ENCODE measurements at regions of chr3 and their contacts with region 1.

Region 1: GRCh38 chr3:34035775-34036413 is 237.5 kb downstream of the PDCD6IP start:
- DNase-seq: no peak
- H3K4me3 ChIP-seq: no peak overlapping the region
- H3K4me3 Mint-ChIP-seq: no peak overlapping the region
- H3K27ac Mint-ChIP-seq: no peak overlapping the region
- H3K4me1 ChIP-seq: no peaks in the 10 kb centered on the region
- H3K4me1 Mint-ChIP-seq: no peaks in the 10 kb centered on the region
- H3K27me3 ChIP-seq: no peaks in the 10 kb centered on the region
- H3K27me3 Mint-ChIP-seq: no peaks in the 10 kb centered on the region
- CTCF ChIP-seq: no peak

Region 2: GRCh38 chr3:34198309-34198708 is 162.4 kb after region 1 on chr3:
- CTCF ChIA-PET with region 1: no interaction called
- POLR2A ChIA-PET with region 1: no interaction called
- intact Hi-C with region 1: loop called (anchors 10 kb)
- DNase-seq: no peak
- H3K4me3 ChIP-seq: no peak overlapping the region
- H3K4me3 Mint-ChIP-seq: no peak overlapping the region
- H3K27ac Mint-ChIP-seq: no peak overlapping the region
- H3K4me1 ChIP-seq: no peaks in the 10 kb centered on the region
- H3K4me1 Mint-ChIP-seq: no peaks in the 10 kb centered on the region
- H3K27me3 ChIP-seq: no peaks in the 10 kb centered on the region
- H3K27me3 Mint-ChIP-seq: no peaks in the 10 kb centered on the region
- CTCF ChIP-seq: no peak

Region 3: DNA sequence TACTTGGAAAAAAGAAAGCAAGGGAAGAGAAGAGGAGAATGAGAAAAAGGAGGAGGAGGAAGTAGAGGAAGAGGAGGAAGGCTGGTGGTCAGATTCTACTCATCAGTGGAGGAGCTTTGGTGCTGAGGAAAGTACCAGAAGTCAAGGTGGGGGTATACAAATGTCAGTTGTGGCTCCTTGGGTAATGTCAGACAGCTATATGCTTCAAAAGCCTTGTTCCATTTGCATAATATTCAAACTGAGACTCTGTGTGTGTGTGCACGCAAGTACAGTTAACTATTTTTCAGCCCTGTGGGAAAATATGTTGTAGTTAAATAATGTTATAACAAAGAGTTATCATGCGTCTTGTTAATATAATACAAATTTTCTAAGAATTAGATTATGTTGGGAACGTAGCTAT is 372.2 kb after region 1 on chr3:
- CTCF ChIA-PET with region 1: no interaction called
- POLR2A ChIA-PET with region 1: no interaction called
- intact Hi-C with region 1: no loop called
- DNase-seq: no peak
- H3K4me3 ChIP-seq: no peak overlapping the region
- H3K4me3 Mint-ChIP-seq: no peak overlapping the region
- H3K27ac Mint-ChIP-seq: no peak overlapping the region
- H3K4me1 ChIP-seq: no peaks in the 10 kb centered on the region
- H3K4me1 Mint-ChIP-seq: no peaks in the 10 kb centered on the region
- H3K27me3 ChIP-seq: no peaks in the 10 kb centered on the region
- H3K27me3 Mint-ChIP-seq: peaks cover 7% of the 10 kb centered on the region
- CTCF ChIP-seq: no peak

Measured in Caco-2 (cell line).